Sigmoid colon (tissue), 7 donors: ENCODE measurements at regions of chr1 and their contacts with region 1.

Region 1: DNA sequence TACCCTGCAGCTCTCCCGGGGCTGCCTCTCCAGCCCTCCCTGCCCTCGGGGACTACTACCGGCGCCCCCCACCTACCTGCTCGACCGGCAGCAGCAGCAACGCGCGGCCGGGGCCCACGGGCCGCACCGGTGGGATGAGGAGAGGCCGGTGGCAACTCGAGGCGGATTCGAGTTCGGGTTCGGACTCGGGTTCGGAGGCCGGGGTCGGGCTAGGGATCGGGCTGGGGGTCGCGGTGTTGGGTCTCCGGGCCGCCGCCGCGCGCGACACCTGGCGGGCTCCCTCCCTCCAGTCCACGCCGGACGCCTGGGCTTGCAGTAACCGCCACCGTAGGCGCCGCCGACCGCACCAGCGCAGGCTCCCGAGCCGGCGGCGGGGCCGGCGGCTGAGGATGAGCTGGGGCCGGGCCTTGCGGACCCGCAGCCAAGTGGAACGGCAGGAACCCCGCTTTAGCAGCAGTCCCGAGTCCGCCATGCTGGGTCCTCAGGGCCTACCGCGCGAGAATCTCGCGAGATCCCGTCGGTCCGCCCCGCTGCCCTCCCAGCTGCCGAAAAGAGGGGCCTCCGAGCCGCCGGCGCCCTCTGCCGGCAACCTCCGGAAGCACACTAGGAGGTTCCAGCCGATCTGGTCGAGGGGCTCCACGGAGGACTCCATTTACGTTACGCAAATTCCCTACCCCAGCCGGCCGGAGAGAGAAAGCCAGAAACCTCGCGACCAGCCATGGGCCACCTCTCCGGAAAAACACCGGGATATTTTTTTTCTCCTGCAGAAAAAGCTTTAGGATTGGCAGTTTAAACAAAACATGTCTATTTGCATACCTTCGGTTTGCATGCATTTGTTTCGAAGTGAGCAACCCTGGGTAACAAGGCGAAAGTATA is at the start of gene NOL9:
- DNase-seq: peak; percentile 96
- H3K4me3 ChIP-seq: peak within 1 kb of the TSS; percentile 68 to 99 (median 78)
- H3K27ac ChIP-seq: peak within 1 kb of the TSS; percentile 74 to 87 (median 80)
- H3K4me1 ChIP-seq: peaks cover 0 to 28% (median 24%) of the 10 kb centered on the region in 4 donors
- H3K27me3 ChIP-seq: no peaks in the 10 kb centered on the region
- CTCF ChIP-seq: peak; percentile 92 to 95 (median 95)
- EP300 ChIP-seq: no peak
- POLR2A ChIP-seq: no peak
- total RNA-seq, gene NOL9: 17.3 to 29.6 (median 20.7) TPM

Region 2: GRCh38 chr1:6579374-6580118 is 25.3 kb after region 1 on chr1 and contains the start of gene ZBTB48:
- intact Hi-C with region 1: loop called (anchors 1 kb)
- DNase-seq: peak; percentile 100
- H3K4me3 ChIP-seq: peak within 1 kb of the TSS; percentile 79 to 93 (median 86)
- H3K27ac ChIP-seq: peak within 1 kb of the TSS; percentile 92 to 97 (median 94)
- H3K4me1 ChIP-seq: peaks cover 0 to 34% (median 29%) of the 10 kb centered on the region in 4 donors
- H3K27me3 ChIP-seq: no peaks in the 10 kb centered on the region
- CTCF ChIP-seq: no peak
- EP300 ChIP-seq: no peak
- POLR2A ChIP-seq: peak; percentile 95
- total RNA-seq, gene ZBTB48: 14.4 to 26.8 (median 16.3) TPM

Region 3: GRCh38 chr1:6624710-6625583 is 70.7 kb after region 1 on chr1 and contains the start of gene THAP3:
- intact Hi-C with region 1: loop called (anchors 2 kb)
- DNase-seq: peak; percentile 95
- H3K4me3 ChIP-seq: peak within 1 kb of the TSS; percentile 63 to 78 (median 74)
- H3K27ac ChIP-seq: peak within 1 kb of the TSS; percentile 88 to 94 (median 92)
- H3K4me1 ChIP-seq: peaks cover 0 to 48% (median 40%) of the 10 kb centered on the region in 4 donors
- H3K27me3 ChIP-seq: no peaks in the 10 kb centered on the region
- CTCF ChIP-seq: no peak
- EP300 ChIP-seq: no peak
- POLR2A ChIP-seq: no peak
- total RNA-seq, gene THAP3: 22.7 to 30.6 (median 26.6) TPM

Region 4: DNA sequence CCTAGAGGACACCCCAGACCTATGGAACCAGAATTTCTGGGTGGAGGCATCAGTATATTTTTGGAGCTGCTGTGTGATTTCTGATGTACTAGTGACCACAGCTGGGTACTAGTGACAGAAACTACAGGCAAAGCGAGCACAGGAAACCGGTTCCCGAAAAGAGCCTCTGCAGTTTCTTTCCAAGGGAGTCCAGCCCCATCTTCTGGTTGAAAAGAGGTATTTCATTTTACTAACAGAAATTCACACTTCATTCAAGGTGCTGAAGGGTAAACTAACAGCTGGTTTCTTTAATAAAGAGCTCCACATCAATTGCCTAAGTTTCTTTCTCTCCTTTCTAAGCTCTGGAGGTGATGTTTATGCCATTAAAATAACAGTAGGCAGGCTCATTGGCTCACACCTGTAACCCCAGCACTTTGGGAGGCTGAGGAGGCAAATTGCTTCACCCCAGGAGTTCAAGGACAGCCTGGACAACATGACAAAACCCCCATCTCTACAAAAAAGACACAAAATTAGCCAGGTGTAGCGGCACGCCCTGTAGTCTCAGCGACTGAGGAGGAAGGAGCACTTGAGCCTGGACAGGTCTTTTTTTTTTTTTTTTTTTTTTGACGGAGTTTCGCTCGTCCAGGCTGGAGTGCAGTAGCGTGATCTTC is 92.4 kb after region 1 on chr1:
- intact Hi-C with region 1: loop called (anchors 2 kb)
- DNase-seq: no peak
- H3K4me3 ChIP-seq: no peak overlapping the region
- H3K27ac ChIP-seq: no peak overlapping the region
- H3K4me1 ChIP-seq: peaks cover 0 to 3% (median 0%) of the 10 kb centered on the region in 4 donors
- H3K27me3 ChIP-seq: no peaks in the 10 kb centered on the region
- CTCF ChIP-seq: peak; percentile 5 to 61 (median 48)
- EP300 ChIP-seq: no peak
- POLR2A ChIP-seq: no peak